ENCODE measurements at regions of chr11 and their contacts with region 1.

Region 1: DNA sequence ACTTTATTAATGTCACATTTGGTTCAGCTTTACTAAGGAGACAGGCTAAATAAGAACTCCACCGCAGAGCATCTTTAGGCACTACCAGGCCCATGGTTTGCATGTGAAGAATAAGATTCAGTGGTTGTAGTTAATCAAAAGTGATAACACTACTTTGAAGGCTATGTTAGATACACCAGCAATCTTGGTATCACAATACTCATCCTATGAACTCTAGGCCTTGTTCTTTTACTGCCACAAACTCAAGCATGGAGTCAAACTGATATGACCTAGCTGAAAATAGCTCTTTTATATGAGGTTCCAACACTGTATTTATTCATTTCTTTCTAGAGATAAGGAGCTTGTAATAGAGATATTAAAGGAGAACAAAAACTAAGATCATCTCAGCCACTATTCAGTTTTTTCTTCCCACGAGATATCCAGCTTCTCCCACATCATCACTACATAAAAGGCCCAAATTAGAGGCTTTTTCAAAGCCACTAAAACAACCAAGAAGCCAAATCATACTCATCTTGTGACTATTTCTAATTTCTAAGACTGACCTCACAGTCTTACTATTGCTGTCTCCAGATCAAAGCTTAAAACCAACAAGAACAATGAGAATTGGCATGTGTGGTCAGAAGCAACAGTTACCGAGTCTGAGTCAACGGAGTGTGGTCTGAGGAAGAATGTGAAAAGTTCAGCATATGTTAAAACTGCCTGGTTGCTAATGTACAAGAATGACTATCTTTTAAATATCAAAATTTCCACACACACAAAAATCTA is 25.1 kb upstream of the GUCY1A2 start:
- DNase-seq: no peak
- ATAC-seq: no peak
- H3K4me3 Mint-ChIP-seq: no peak overlapping the region
- H3K27ac Mint-ChIP-seq: no peak overlapping the region
- H3K4me1 Mint-ChIP-seq: no peaks in the 10 kb centered on the region
- H3K27me3 Mint-ChIP-seq: no peaks in the 10 kb centered on the region

Region 2: GRCh38 chr11:106156290-106156937 is 887.0 kb before region 1 on chr11:
- CTCF ChIA-PET with region 1: no interaction called
- POLR2A ChIA-PET with region 1: no interaction called
- intact Hi-C with region 1: loop called in 1 of 2 experiments (anchors 5 kb)
- DNase-seq: peak; percentile 20
- ATAC-seq: peak; percentile 33
- H3K4me3 Mint-ChIP-seq: no peak overlapping the region
- H3K27ac Mint-ChIP-seq: no peak overlapping the region
- H3K4me1 Mint-ChIP-seq: no peaks in the 10 kb centered on the region
- H3K27me3 Mint-ChIP-seq: peaks cover 7% of the 10 kb centered on the region

Region 3: GRCh38 chr11:106311531-106312230 is 731.7 kb before region 1 on chr11:
- CTCF ChIA-PET with region 1: no interaction called
- POLR2A ChIA-PET with region 1: no interaction called
- intact Hi-C with region 1: loop called in 1 of 2 experiments (anchors 10 kb)
- DNase-seq: no peak
- ATAC-seq: no peak
- H3K4me3 Mint-ChIP-seq: no peak overlapping the region
- H3K27ac Mint-ChIP-seq: no peak overlapping the region
- H3K4me1 Mint-ChIP-seq: no peaks in the 10 kb centered on the region
- H3K27me3 Mint-ChIP-seq: peaks cover 2% of the 10 kb centered on the region

Region 4: GRCh38 chr11:106827687-106828086 is 215.7 kb before region 1 on chr11:
- CTCF ChIA-PET with region 1: no interaction called
- POLR2A ChIA-PET with region 1: no interaction called
- intact Hi-C with region 1: no loop called
- DNase-seq: no peak
- ATAC-seq: no peak
- H3K4me3 Mint-ChIP-seq: no peak overlapping the region
- H3K27ac Mint-ChIP-seq: no peak overlapping the region
- H3K4me1 Mint-ChIP-seq: no peaks in the 10 kb centered on the region
- H3K27me3 Mint-ChIP-seq: no peaks in the 10 kb centered on the region

Region 5: GRCh38 chr11:106879832-106880546 is 163.4 kb before region 1 on chr11:
- CTCF ChIA-PET with region 1: no interaction called
- POLR2A ChIA-PET with region 1: no interaction called
- intact Hi-C with region 1: no loop called
- DNase-seq: no peak
- ATAC-seq: no peak
- H3K4me3 Mint-ChIP-seq: no peak overlapping the region
- H3K27ac Mint-ChIP-seq: no peak overlapping the region
- H3K4me1 Mint-ChIP-seq: no peaks in the 10 kb centered on the region
- H3K27me3 Mint-ChIP-seq: no peaks in the 10 kb centered on the region

Region 6: GRCh38 chr11:107071129-107071528 is 27.7 kb after region 1 on chr11:
- CTCF ChIA-PET with region 1: no interaction called
- POLR2A ChIA-PET with region 1: no interaction called
- intact Hi-C with region 1: no loop called
- DNase-seq: no peak
- ATAC-seq: no peak
- H3K4me3 Mint-ChIP-seq: no peak overlapping the region
- H3K27ac Mint-ChIP-seq: no peak overlapping the region
- H3K4me1 Mint-ChIP-seq: no peaks in the 10 kb centered on the region
- H3K27me3 Mint-ChIP-seq: no peaks in the 10 kb centered on the region

Measured in activated CD4-positive, alpha-beta T cell treated with anti-CD3 and anti-CD28 coated beads for 36 hours (primary cell).